Activated CD4-positive, alpha-beta memory T cell treated with anti-CD3 and anti-CD28 coated beads for 36 hours (primary cell): ENCODE measurements at regions of chr4 and their contacts with region 1.

Region 1: DNA sequence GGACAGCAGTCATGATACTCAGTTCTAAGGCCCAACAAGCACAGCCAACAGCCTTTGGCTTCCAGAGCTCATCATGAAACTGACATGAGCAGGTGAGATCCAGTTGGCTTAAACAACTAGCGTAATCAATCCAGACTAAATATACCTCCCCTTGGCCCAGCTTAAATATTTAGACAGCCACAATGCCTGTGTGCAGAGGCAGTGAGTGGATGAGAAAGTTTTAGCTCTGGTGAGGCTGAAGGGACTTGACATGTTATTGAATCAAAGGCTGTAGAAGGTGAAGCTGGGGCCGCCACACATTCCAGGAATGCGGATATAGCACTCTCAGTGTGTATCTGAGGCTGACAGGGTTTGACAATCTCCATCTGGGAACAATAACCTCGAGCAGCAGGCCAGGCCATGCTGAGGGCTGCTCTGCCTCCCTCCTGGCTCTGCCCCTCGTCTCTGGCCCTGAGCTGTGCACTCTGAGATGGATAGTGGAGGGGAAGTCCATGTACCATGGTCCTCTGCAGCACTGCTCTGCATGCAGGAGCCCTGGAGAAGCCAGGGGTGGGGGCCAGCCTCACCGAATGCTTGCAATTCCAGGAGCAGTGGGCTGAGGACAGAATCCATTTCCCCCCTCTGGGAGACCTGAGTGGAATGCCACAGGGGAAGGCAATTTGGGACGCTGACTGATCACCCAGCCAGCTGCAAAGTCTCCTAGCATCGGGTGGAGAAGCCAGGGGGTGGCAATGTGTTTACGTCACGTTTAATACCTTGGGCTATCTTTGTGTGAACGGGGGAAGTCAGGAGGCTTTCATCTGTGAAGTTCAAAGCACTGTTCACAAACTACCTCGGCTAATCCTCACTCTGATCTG is 37.3 kb upstream of the RASL11B start:
- DNase-seq: no peak
- H3K4me3 Mint-ChIP-seq: no peak overlapping the region
- H3K27ac Mint-ChIP-seq: peak overlapping the region; percentile 14
- H3K4me1 Mint-ChIP-seq: peaks cover 39% of the 10 kb centered on the region
- H3K27me3 Mint-ChIP-seq: no peaks in the 10 kb centered on the region

Region 2: GRCh38 chr4:52659001-52659721 is 165.7 kb before region 1 on chr4 and contains the start of gene USP46:
- CTCF ChIA-PET with region 1: no interaction called
- POLR2A ChIA-PET with region 1: interaction called, 3 read pairs
- intact Hi-C with region 1: loop called (anchors 5 kb)
- DNase-seq: peak; percentile 68
- H3K4me3 Mint-ChIP-seq: peak within 1 kb of the TSS; percentile 84
- H3K27ac Mint-ChIP-seq: peak within 1 kb of the TSS; percentile 79
- H3K4me1 Mint-ChIP-seq: peaks cover 40% of the 10 kb centered on the region
- H3K27me3 Mint-ChIP-seq: peaks cover 2% of the 10 kb centered on the region
- total RNA-seq, gene USP46: 6.2 to 7.0 TPM

Region 3: DNA sequence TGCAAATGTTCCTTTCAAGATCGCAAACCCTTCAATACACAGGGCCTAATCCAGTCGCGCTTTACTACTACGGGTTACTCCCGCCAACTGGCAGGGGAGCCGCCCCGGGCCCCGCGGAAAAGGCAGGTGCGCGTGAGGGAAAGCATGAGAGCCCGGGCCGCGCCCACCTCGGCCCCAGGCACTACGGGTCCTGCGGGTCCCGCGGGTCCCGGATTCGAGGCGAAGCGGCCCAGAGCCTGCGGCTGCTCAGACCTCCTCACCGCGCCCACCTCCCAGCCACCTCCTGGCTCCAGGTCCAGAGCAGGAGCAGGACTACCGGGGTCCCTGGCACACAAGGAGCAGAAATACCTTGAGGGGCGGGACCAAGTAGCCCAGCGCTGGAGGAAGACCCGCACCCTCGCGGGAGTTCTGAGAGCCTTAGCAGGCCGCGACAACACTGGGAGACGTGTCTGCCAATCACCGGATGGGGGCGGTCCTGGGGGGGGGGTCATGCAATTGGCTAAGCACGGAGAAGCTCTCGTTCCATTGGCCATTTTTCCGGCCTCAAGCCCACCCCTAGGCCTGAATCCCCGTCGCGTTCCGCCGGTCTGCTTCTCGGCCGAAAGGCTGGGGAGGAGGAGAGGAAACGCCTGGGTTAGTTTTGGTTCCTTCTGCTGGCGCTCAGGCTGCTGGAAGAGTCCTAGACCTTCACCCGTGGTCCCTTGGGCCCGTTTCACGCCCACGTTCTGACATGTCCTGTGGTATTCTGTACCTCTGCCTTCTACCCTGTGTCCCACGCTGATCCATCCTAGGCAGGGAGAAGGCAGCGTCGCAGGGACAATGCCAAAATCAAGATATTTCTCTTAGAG is 102.6 kb before region 1 on chr4:
- CTCF ChIA-PET with region 1: no interaction called
- POLR2A ChIA-PET with region 1: interaction called, 4 read pairs
- intact Hi-C with region 1: loop called (anchors 5 kb)
- DNase-seq: peak; percentile 95
- H3K4me3 Mint-ChIP-seq: peak overlapping the region; percentile 78
- H3K27ac Mint-ChIP-seq: peak overlapping the region; percentile 82
- H3K4me1 Mint-ChIP-seq: peaks cover 16% of the 10 kb centered on the region
- H3K27me3 Mint-ChIP-seq: no peaks in the 10 kb centered on the region

Region 4: DNA sequence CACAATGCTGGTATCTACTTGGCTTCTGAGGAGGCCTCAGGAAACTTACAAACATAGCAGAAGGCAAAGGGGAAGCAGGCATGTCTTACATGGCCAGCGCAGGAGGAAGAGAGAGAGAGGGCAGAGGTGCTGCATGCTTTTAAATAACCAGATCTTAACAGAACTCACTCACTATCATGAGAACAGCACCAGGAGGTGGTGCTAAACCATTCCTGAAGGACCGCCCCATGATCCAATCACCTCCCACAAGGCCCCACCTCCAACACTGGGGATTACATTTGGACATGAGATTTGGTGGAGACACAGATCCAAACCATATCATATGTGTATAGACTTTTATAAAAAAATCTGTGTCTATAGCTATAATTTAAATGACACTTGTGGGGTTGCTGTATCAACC is 25.0 kb before region 1 on chr4:
- CTCF ChIA-PET with region 1: no interaction called
- POLR2A ChIA-PET with region 1: no interaction called
- intact Hi-C with region 1: no loop called
- DNase-seq: no peak
- H3K4me3 Mint-ChIP-seq: no peak overlapping the region
- H3K27ac Mint-ChIP-seq: no peak overlapping the region
- H3K4me1 Mint-ChIP-seq: no peaks in the 10 kb centered on the region
- H3K27me3 Mint-ChIP-seq: peaks cover 16% of the 10 kb centered on the region

Region 5: DNA sequence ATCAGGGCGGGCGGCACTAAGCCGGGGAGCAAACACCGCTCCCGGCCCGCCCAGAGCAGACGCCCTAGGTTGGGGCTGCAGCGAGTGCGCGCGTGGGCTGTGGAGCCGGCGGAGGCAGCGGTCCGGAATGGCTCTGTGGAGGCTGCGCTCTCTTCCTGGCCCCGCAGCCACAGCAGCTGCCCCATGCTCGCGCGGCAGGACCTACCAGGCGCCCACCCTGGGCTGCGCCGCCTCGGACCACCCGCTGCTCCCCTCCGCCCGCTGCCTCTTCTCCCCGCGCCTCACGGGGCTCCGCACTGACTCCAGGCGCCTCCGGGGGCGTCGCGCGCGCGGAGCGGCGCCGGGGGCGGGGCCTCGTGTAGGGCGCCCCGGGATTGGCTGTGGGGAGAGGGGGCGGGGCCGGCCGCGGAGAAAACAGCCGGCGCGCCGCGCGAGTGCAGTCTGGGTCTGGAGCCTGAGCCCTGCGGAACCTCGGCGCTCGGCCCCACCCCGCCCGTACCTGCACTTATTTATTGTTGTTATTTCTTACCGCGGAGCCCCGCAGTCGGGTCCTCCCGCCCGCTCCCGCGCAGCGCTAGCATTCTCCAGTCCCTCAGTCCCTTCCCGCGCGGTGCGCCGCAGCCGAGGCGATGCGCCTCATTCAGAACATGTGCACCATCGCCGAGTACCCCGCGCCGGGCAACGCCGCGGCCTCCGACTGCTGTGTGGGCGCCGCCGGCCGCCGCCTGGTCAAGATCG is 37.2 kb after region 1 on chr4 and contains the start of gene RASL11B:
- CTCF ChIA-PET with region 1: no interaction called
- POLR2A ChIA-PET with region 1: no interaction called
- intact Hi-C with region 1: loop called (anchors 5 kb)
- DNase-seq: peak; percentile 88
- H3K4me3 Mint-ChIP-seq: peak within 1 kb of the TSS; percentile 64
- H3K27ac Mint-ChIP-seq: no peak within 1 kb of the TSS
- H3K4me1 Mint-ChIP-seq: peaks cover 5% of the 10 kb centered on the region
- H3K27me3 Mint-ChIP-seq: peaks cover 36% of the 10 kb centered on the region
- total RNA-seq, gene RASL11B: 0.29 to 0.40 TPM

Region 6: GRCh38 chr4:52894443-52894842 is 69.6 kb after region 1 on chr4:
- CTCF ChIA-PET with region 1: no interaction called
- POLR2A ChIA-PET with region 1: interaction called, 6 read pairs
- intact Hi-C with region 1: loop called (anchors 5 kb)
- DNase-seq: no peak
- H3K4me3 Mint-ChIP-seq: no peak overlapping the region
- H3K27ac Mint-ChIP-seq: no peak overlapping the region
- H3K4me1 Mint-ChIP-seq: peaks cover 17% of the 10 kb centered on the region
- H3K27me3 Mint-ChIP-seq: no peaks in the 10 kb centered on the region

Region 7: DNA sequence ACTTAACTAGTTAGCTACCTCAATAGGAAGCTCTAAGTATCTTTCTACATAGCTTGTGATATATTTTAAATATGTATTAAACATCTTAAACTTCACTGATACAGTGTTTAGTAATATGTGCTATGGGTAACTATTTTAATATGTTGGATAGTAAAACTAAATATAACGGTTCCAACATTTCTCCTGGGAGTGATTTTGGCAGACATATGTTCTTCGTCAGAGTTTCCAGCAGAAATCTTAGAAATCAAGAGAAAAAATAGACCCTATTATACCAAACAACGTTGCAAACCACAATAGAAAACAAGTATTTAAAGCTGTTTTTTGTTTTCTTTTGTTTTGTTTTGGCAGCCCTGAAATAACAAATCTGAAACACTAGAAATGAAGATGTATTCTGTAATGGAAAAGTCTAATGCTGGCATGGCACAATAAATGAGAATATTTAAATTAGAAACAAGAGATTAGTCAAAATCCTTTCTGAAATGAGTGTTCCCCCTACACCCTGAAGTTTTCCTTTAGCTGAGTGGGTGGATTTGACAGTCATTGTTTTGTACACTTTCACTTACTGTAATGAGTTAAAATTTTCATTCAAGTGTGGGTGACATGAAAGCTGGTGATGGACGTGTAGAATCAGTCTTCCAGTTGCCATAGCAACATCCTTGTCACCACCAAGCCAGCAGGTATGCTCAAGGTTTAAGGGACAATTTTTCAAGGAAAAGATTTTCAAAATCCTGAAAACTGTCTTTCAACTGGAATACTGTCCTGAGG is 307.5 kb after region 1 on chr4:
- CTCF ChIA-PET with region 1: no interaction called
- POLR2A ChIA-PET with region 1: no interaction called
- intact Hi-C with region 1: no loop called
- DNase-seq: peak; percentile 26
- H3K4me3 Mint-ChIP-seq: no peak overlapping the region
- H3K27ac Mint-ChIP-seq: peak overlapping the region; percentile 38
- H3K4me1 Mint-ChIP-seq: peaks cover 27% of the 10 kb centered on the region
- H3K27me3 Mint-ChIP-seq: no peaks in the 10 kb centered on the region